ENCODE measurements at regions of chr6 and their contacts with region 1.

Region 1: DNA sequence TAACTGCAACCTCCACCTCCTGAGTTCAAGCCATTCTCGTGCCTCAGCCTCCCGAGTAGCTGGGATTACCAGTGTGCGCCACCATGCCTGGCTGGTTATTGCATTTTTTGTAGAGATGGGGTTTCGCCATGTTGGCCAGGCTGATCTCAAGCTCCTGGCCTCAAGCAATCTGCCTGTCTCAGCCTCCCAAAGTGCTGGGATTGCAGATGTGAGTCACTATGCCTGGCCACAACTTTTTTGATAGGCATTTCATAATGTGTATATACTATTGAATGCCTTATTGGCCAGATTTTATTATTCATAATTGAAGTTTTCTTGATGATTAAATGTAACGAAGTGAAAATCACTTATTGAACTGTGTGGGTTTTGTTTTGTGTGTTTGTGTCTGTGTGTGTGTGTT is 27.9 kb downstream of the FIG4 start:
- H3K4me3 Mint-ChIP-seq: no peak overlapping the region
- H3K27ac Mint-ChIP-seq: no peak overlapping the region
- H3K4me1 Mint-ChIP-seq: peaks cover 17% of the 10 kb centered on the region
- H3K27me3 Mint-ChIP-seq: no peaks in the 10 kb centered on the region

Region 2: GRCh38 chr6:109455502-109456282 is 263.3 kb before region 1 on chr6 and contains the start of gene MICAL1:
- intact Hi-C with region 1: no loop called
- H3K4me3 Mint-ChIP-seq: peak within 1 kb of the TSS; percentile 96
- H3K27ac Mint-ChIP-seq: peak within 1 kb of the TSS; percentile 95
- H3K4me1 Mint-ChIP-seq: peaks cover 72% of the 10 kb centered on the region
- H3K27me3 Mint-ChIP-seq: no peaks in the 10 kb centered on the region

Region 3: DNA sequence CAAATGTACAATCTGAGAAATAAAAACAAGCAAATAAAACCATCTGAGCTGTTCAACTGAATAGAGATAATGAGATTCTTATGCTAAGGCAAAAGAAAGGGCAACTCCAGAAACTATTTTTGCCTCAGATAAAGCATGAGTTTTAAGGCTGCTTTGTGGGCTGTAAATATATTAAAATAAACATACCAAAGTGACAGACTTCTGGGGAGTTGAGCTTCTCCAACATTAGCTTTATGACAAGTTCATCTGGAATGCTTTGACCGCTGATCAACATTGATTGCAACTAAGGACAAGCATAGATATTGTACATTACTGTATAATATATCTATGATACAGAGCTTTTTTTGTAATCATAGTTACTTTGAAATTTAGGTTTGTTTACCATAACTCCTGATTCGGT is 47.3 kb before region 1 on chr6:
- intact Hi-C with region 1: no loop called
- H3K4me3 Mint-ChIP-seq: no peak overlapping the region
- H3K27ac Mint-ChIP-seq: no peak overlapping the region
- H3K4me1 Mint-ChIP-seq: no peaks in the 10 kb centered on the region
- H3K27me3 Mint-ChIP-seq: no peaks in the 10 kb centered on the region

Region 4: GRCh38 chr6:109783250-109783986 is 64.4 kb after region 1 on chr6:
- intact Hi-C with region 1: loop called (anchors 5 kb)
- H3K4me3 Mint-ChIP-seq: no peak overlapping the region
- H3K27ac Mint-ChIP-seq: no peak overlapping the region
- H3K4me1 Mint-ChIP-seq: no peaks in the 10 kb centered on the region
- H3K27me3 Mint-ChIP-seq: no peaks in the 10 kb centered on the region

Measured in dendritic cell treated with granulocyte-macrophage colony-stimulating factor and Interleukin-4, amounts not matched to agents 40 ng/mL and 50 ng/mL, for 4 days (primary cell).